ENCODE measurements at regions of chr15 and their contacts with region 1.

Region 1: DNA sequence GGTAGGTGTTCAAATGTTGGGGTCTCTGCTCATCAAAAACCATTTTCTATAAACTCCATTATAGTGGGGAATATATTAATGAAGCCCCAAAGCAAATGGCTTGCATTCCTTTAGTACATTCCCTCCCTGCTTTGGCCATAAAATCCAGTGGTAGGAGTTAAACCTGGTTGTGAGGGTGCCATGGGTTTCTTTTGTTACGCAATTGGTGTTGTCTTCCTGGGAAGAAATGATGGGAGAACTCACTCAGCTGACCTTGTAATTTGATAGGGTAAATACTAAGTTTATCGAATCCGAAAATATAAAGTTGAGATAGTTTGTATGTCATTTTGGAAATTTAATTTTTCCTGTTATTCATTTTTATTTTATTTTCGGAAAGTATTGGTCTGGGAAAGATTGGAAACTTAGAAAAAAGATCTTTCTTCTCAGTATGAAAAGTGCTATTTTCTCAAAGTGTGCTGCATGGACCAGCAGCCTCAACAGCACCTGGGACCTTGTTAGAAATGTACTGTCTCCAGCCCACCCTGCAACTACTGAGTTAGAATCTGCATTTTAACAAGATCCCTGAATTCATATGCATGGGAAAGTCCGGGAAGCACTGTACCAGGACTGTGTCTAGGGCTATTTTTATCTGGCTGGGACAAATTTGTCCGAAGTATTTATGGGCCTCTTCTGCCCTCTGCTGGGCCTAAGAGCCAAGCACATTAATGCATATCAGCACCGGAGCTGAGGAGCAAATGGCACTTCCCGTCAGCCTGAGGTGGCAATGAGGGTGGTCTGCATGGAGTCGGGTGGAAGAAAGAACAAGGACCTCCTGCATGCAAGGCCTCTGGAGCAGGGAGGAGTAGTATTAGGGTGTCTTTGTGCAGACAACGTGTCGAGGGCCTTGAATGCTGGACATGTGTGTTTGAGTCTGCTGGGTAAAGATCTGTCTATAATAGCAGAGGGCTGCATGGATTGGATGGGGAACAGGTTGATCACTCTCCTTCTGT is 54.7 kb downstream of the FAM81A start:
- DNase-seq: peak; percentile 50 to 86 (median 64)
- H3K4me3 ChIP-seq: peak overlapping the region in 6 of 59 donors; percentile 4 to 37 (median 19)
- H3K27ac ChIP-seq: peak overlapping the region in 45 of 59 donors; percentile 4 to 87 (median 57)
- H3K27me3 ChIP-seq: no peaks in the 10 kb centered on the region
- CTCF ChIP-seq: peak; percentile 61 to 99 (median 89)

Region 2: DNA sequence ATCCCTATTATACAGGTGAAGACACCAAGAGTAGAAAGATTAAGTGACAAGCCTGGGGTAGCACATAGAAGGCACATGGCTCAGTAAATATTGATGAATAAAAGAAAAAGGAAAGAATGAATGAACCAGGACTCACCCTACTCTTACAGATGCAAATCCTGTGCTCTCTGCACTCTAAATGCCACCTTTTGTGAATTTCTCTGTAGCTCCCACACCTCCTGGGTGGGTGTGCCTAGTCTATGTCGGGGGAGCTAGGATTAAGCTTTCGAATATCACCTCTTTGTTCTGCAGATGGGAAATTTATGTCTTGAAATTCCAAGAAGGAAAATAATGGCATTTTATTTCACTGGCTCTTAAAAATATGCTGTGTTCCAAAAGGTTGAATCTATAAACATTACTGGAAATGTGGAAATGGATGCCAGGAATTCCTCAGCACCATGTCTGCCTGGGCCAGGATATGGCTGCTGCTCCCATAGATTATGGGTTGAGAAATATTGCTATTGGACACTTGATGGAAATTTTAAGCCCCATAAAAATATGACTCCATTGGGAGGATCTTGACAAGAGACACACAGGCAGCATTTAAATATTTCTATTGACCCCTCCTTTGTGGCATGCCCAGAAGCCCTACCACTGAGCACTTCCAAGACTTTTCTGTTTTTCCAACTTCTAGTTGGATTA is 344.4 kb before region 1 on chr15:
- intact Hi-C with region 1: loop called in 1 of 2 experiments (anchors 5 kb)
- DNase-seq: no peak
- H3K4me3 ChIP-seq: no peak overlapping the region
- H3K27ac ChIP-seq: peak overlapping the region in 35 of 59 donors; percentile 1 to 90 (median 41)
- H3K27me3 ChIP-seq: no peaks in the 10 kb centered on the region
- CTCF ChIP-seq: no peak

Region 3: GRCh38 chr15:59247364-59247763 is 245.3 kb before region 1 on chr15:
- intact Hi-C with region 1: loop called (anchors 5 kb)
- DNase-seq: peak in 5 of 10 donors; percentile 53 to 77 (median 58)
- H3K4me3 ChIP-seq: no peak overlapping the region
- H3K27ac ChIP-seq: peak overlapping the region in 23 of 59 donors; percentile 3 to 61 (median 33)
- H3K27me3 ChIP-seq: no peaks in the 10 kb centered on the region
- CTCF ChIP-seq: peak; percentile 37 to 81 (median 66)

Region 4: DNA sequence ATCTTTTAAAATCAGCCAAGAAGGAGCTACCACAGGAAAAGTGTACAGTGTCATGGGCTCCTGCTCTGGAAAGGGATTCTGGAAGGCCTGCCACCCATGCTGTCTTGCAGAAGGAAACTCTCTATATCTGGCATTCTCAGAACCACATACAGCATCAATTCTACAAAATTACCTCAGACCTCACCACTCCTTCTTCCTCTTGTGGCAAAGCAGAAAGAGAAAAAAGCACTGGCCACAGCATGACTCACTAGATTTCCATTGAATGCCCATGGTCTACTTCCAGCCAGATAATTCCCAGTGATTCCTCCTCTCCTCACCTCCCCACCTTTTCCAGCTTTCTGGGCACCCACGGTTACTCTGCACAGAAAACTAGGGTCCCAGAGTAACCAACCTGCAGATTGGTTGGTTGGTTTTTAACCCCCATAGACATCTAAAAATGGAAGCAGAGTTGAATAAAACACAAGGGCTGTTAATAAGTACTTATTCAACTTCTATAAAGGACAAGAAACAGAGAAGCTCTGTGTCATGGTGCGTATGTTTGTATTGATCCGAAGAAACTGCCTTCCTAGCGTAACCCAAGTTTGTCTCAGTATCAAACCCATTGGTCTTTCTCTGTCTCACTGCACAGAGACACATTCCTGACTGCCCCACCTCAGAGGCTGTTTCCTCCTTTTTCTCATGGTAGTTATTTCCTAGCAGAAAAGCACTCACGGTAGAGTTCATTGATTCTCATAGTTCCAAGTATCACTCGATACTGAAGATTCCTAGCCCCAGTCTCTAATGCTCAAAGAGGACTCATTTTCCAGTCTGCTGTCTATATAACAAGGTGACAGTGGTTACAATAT is 218.3 kb before region 1 on chr15:
- intact Hi-C with region 1: no loop called
- DNase-seq: no peak
- H3K4me3 ChIP-seq: no peak overlapping the region
- H3K27ac ChIP-seq: peak overlapping the region in 39 of 59 donors; percentile 5 to 95 (median 48)
- H3K27me3 ChIP-seq: no peaks in the 10 kb centered on the region
- CTCF ChIP-seq: no peak

Region 5: GRCh38 chr15:59437817-59438562 is 54.7 kb before region 1 on chr15 and contains the start of gene FAM81A:
- intact Hi-C with region 1: loop called in 1 of 2 experiments (anchors 5 kb)
- DNase-seq: peak; percentile 67 to 92 (median 88)
- H3K4me3 ChIP-seq: peak within 1 kb of the TSS; percentile 57 to 83 (median 70)
- H3K27ac ChIP-seq: peak within 1 kb of the TSS in 58 of 59 donors; percentile 17 to 91 (median 77)
- H3K27me3 ChIP-seq: no peaks in the 10 kb centered on the region
- CTCF ChIP-seq: peak in 1 of 56 donors; percentile 9
- total RNA-seq, gene FAM81A: 23.4 to 120 (median 69.9) TPM

Measured in dorsolateral prefrontal cortex (tissue), 120 donors.